Right ventricle myocardium inferior (tissue), 1 donor: ENCODE measurements at regions of chr4 and their contacts with region 1.

Region 1: DNA sequence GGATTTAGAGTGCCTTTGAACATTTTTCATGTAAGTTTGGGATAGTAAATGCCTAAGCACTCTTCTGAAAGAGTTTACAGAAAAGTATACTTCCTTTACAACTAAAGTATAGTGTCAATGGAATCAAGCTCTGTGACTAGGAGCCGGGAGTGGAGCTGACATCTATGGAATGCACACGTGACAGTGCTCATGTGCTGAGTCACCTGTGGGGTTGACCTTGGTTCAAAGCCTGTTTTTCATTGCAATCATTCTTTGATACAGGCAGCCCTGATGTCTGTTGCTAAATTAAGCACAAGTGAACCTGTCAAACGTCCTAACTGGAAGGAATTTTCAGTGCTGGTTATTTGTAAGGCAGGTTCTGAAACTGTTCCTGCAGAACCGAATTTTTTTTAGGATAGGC is 82.5 kb downstream of the GPAT3 start:
- DNase-seq: no peak
- ATAC-seq: peak; percentile 95

Region 2: GRCh38 chr4:83546786-83547185 is 71.6 kb before region 1 on chr4:
- intact Hi-C with region 1: loop called (anchors 2 kb)
- DNase-seq: no peak
- ATAC-seq: peak; percentile 73

Region 3: GRCh38 chr4:83582289-83582769 is 36.1 kb before region 1 on chr4:
- intact Hi-C with region 1: loop called (anchors 5 kb)
- DNase-seq: no peak
- ATAC-seq: peak; percentile 83